Activated T-helper 2 cell treated with anti-CD3 and anti-CD28 coated beads, Interferon-gamma antibody, Interleukin-2, Interleukin-4, amounts not matched to agents 10 μg/mL and 5 μg/mL and 100 μg/mL, durations not matched to agents 14 hours and 24 hours and 36 hours (primary cell): ENCODE measurements at regions of chr3 and their contacts with region 1.

Region 1: GRCh38 chr3:56291244-56291680 is 177.0 kb downstream of the ERC2 start:
- DNase-seq: no peak
- H3K4me3 Mint-ChIP-seq: no peak overlapping the region
- H3K27ac Mint-ChIP-seq: peak overlapping the region; percentile 62
- H3K4me1 Mint-ChIP-seq: peaks cover 32% of the 10 kb centered on the region
- H3K27me3 Mint-ChIP-seq: no peaks in the 10 kb centered on the region

Region 2: GRCh38 chr3:56131974-56132590 is 159.2 kb before region 1 on chr3:
- intact Hi-C with region 1: loop called (anchors 5 kb)
- DNase-seq: no peak
- H3K4me3 Mint-ChIP-seq: no peak overlapping the region
- H3K27ac Mint-ChIP-seq: peak overlapping the region; percentile 24
- H3K4me1 Mint-ChIP-seq: peaks cover 10% of the 10 kb centered on the region
- H3K27me3 Mint-ChIP-seq: peaks cover 15% of the 10 kb centered on the region

Region 3: DNA sequence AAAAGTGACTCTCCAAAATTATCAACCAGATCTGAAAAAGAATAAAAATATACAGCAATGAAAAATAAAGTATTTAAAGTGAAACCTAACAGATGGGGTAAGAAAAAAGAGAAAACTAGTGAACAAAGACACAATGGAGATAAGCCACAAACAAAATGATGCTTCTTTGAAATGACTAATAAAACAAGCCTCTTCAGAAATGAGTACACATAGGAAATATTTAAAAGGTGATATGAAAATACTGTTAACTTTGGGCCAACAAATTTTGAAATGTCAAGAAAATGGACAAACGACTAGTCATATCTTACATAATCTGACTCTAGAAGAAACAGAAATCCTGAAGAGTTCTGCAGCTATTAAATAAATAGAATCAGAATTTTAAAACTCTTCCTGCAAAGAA is 12.8 kb after region 1 on chr3:
- intact Hi-C with region 1: loop called (anchors 2 kb)
- DNase-seq: no peak
- H3K4me3 Mint-ChIP-seq: no peak overlapping the region
- H3K27ac Mint-ChIP-seq: no peak overlapping the region
- H3K4me1 Mint-ChIP-seq: peaks cover 4% of the 10 kb centered on the region
- H3K27me3 Mint-ChIP-seq: peaks cover 3% of the 10 kb centered on the region

Region 4: DNA sequence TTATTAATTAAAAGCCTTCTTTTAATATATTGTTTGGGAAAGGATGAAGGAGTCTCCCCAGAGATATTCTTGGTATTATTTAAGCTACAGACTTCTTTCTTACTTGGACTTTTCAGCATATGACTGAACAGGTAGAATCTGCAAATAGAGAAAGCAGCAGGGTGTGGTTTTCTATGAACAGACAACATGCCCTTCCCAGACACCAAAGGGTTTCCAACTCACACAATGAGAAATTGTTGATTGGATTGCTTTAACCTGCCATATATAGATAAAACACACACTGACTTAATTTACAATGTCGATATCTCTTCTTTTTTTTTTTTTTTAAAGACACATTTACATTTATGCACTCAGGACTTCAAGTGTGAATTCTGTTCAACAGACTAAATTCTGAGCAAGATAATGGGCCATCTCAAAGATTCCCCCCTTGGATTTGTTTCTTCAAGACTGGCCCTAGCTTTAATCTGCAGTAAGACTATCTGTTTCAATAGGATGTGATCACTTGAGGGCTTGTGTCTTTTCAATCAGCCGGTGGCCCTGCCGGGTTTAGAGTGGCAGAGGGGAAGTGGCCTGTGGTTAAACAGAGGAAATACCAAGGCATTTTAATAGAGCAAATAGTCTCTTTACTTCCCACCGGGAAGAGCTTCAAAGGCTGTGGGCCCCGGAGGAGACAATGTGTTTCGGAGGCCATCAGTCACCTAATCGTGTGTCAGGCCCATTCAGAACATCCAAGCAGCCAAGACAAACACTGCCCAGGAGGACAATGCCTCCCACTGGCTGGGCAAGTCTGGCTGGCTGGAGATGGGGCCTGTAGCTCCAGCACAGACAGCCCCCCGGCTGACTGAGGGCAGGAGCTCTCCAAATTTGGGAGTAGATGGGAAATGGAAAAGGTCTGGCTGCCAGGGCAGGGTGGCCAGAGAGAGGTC is 867.8 kb after region 1 on chr3:
- intact Hi-C with region 1: no loop called
- DNase-seq: no peak
- H3K4me3 Mint-ChIP-seq: no peak overlapping the region
- H3K27ac Mint-ChIP-seq: no peak overlapping the region
- H3K4me1 Mint-ChIP-seq: peaks cover 12% of the 10 kb centered on the region
- H3K27me3 Mint-ChIP-seq: peaks cover 66% of the 10 kb centered on the region